B cell (primary cell): ENCODE measurements at regions of chr12 and their contacts with region 1.

Region 1: GRCh38 chr12:57904848-57905811 is 36.2 kb upstream of the ATP23 start:
- DNase-seq: peak; percentile 90
- ATAC-seq: peak; percentile 100
- H3K4me3 ChIP-seq: peak overlapping the region in 3 of 5 experiments; percentile 18 to 32 (median 29)
- H3K4me3 Mint-ChIP-seq: peak overlapping the region; percentile 68
- H3K27ac ChIP-seq: no peak overlapping the region
- H3K27ac Mint-ChIP-seq: peak overlapping the region; percentile 50
- H3K4me1 ChIP-seq: peaks cover 3 to 6% of the 10 kb centered on the region in 2 donors
- H3K4me1 Mint-ChIP-seq: peaks cover 8% of the 10 kb centered on the region
- H3K27me3 ChIP-seq: peaks cover 0 to 9% (median 4%) of the 10 kb centered on the region in 4 experiments
- H3K27me3 Mint-ChIP-seq: peaks cover 22% of the 10 kb centered on the region
- CTCF ChIP-seq: peak; percentile 100

Region 2: DNA sequence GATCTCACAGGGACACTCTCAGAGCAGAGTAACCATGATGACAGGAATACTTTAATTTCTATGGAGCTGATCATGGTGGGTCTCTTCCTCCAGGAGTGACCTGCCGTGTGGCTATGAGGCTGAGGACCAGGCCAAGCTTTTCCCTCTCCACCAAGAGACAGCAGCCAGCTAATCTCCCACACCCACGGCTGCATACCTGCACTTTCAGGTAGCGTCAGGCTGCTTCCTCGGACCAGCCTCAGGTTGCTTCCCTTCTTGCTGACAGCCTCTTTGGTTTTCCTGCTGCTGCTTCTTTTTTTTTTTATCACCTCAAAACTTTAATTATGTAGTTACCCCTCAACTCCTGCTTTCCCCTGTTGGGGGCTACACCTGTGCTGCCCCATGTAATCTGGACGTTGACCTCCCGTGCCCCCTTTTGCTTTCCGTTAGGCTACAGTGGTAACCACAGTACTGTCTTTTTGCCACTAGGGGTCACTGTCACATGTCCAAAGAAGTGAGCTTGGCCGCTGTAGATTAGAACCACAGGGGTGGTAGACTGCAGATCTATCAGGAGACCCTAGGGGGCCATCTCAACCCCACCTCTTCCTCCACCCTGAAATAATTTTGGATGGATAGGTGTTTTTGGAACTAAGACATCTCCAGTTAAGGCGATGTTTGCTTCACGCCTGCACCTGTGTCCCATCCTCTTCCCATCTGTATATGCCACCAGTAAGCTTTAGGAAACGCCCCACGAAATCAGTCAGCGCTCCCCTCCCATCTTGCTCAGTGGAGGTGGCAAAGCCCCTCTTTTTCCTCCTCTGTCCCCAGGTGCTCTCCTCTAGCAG is 321.9 kb before region 1 on chr12:
- CTCF ChIA-PET with region 1: interaction called, 23 read pairs
- POLR2A ChIA-PET with region 1: no interaction called
- intact Hi-C with region 1: no loop called
- DNase-seq: peak; percentile 88
- ATAC-seq: peak; percentile 100
- H3K4me3 ChIP-seq: no peak overlapping the region
- H3K4me3 Mint-ChIP-seq: no peak overlapping the region
- H3K27ac ChIP-seq: no peak overlapping the region
- H3K27ac Mint-ChIP-seq: no peak overlapping the region
- H3K4me1 ChIP-seq: peaks cover 0 to 3% of the 10 kb centered on the region in 2 donors
- H3K4me1 Mint-ChIP-seq: peaks cover 2% of the 10 kb centered on the region
- H3K27me3 ChIP-seq: peaks cover 0 to 46% (median 10%) of the 10 kb centered on the region in 4 experiments
- H3K27me3 Mint-ChIP-seq: peaks cover 14% of the 10 kb centered on the region
- CTCF ChIP-seq: peak; percentile 98

Region 3: GRCh38 chr12:57782608-57783465 is 122.3 kb before region 1 on chr12 and contains the start of gene TSFM:
- CTCF ChIA-PET with region 1: interaction called, 59 read pairs
- POLR2A ChIA-PET with region 1: no interaction called
- intact Hi-C with region 1: loop called (anchors 1 kb)
- DNase-seq: peak; percentile 96
- ATAC-seq: peak; percentile 99
- H3K4me3 ChIP-seq: peak within 1 kb of the TSS; percentile 83 to 100 (median 98)
- H3K4me3 Mint-ChIP-seq: peak within 1 kb of the TSS; percentile 100
- H3K27ac ChIP-seq: peak within 1 kb of the TSS; percentile 45 to 77
- H3K27ac Mint-ChIP-seq: peak within 1 kb of the TSS; percentile 96
- H3K4me1 ChIP-seq: peaks cover 9 to 17% of the 10 kb centered on the region in 2 donors
- H3K4me1 Mint-ChIP-seq: peaks cover 18% of the 10 kb centered on the region
- H3K27me3 ChIP-seq: no peaks in the 10 kb centered on the region
- H3K27me3 Mint-ChIP-seq: no peaks in the 10 kb centered on the region
- CTCF ChIP-seq: peak; percentile 94
- total RNA-seq, gene TSFM: 20.6 and 20.9 TPM in 2 replicates

Region 4: GRCh38 chr12:57815177-57816000 is 89.7 kb before region 1 on chr12:
- CTCF ChIA-PET with region 1: interaction called, 11 read pairs
- POLR2A ChIA-PET with region 1: interaction called, 3 read pairs
- intact Hi-C with region 1: no loop called
- DNase-seq: no peak
- ATAC-seq: no peak
- H3K4me3 ChIP-seq: no peak overlapping the region
- H3K4me3 Mint-ChIP-seq: no peak overlapping the region
- H3K27ac ChIP-seq: no peak overlapping the region
- H3K27ac Mint-ChIP-seq: no peak overlapping the region
- H3K4me1 ChIP-seq: no peaks in the 10 kb centered on the region
- H3K4me1 Mint-ChIP-seq: no peaks in the 10 kb centered on the region
- H3K27me3 ChIP-seq: no peaks in the 10 kb centered on the region
- H3K27me3 Mint-ChIP-seq: no peaks in the 10 kb centered on the region
- CTCF ChIP-seq: no peak

Region 5: GRCh38 chr12:57836442-57837375 is 68.4 kb before region 1 on chr12:
- CTCF ChIA-PET with region 1: interaction called, 182 read pairs
- POLR2A ChIA-PET with region 1: interaction called, 9 read pairs
- intact Hi-C with region 1: loop called (anchors 1 kb)
- DNase-seq: peak; percentile 63
- ATAC-seq: peak; percentile 29
- H3K4me3 ChIP-seq: peak overlapping the region in 4 of 5 experiments; percentile 3 to 38 (median 12)
- H3K4me3 Mint-ChIP-seq: peak overlapping the region; percentile 79
- H3K27ac ChIP-seq: peak overlapping the region; percentile 62 to 81
- H3K27ac Mint-ChIP-seq: peak overlapping the region; percentile 87
- H3K4me1 ChIP-seq: peaks cover 94 to 99% of the 10 kb centered on the region in 2 donors
- H3K4me1 Mint-ChIP-seq: peaks cover 93% of the 10 kb centered on the region
- H3K27me3 ChIP-seq: no peaks in the 10 kb centered on the region
- H3K27me3 Mint-ChIP-seq: no peaks in the 10 kb centered on the region
- CTCF ChIP-seq: no peak

Region 6: DNA sequence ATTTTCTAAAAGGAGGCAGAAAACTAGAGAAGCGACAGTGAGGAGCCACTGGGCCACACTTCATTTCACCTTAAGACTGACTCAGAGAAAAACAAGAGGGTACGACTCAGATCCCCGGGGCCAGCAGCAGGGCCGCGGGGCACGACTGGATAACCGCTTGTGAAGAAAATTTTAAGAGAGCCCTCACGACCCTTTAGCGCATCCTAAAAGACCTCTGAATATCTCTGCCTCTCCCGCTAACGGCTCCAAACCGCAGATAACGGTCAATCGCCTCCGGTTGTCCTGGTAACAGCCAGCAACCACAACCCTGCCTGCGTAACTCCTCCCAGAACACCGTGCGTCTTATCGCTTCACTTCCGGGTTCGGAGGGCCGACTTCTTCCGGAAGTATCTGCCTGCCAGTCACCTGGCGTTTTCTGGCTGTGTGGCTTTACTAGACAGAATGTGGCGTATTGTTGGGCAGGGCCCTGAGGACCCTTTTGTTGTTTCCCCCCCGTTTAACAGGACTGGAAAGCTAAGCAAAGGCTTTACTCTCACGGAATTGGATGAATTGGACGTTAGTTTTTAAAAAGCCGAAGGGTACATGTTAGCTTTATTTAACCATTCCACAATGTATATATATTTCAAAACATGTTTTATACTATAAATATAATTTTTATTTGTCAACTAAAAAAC is 30.8 kb after region 1 on chr12:
- CTCF ChIA-PET with region 1: interaction called, 6 read pairs
- POLR2A ChIA-PET with region 1: interaction called, 11 read pairs
- intact Hi-C with region 1: loop called (anchors 2 kb)
- DNase-seq: peak; percentile 96
- ATAC-seq: peak; percentile 92
- H3K4me3 ChIP-seq: peak overlapping the region; percentile 65 to 90 (median 73)
- H3K4me3 Mint-ChIP-seq: peak overlapping the region; percentile 91
- H3K27ac ChIP-seq: peak overlapping the region; percentile 95 to 99
- H3K27ac Mint-ChIP-seq: peak overlapping the region; percentile 97
- H3K4me1 ChIP-seq: peaks cover 17% of the 10 kb centered on the region in 2 donors
- H3K4me1 Mint-ChIP-seq: peaks cover 23% of the 10 kb centered on the region
- H3K27me3 ChIP-seq: no peaks in the 10 kb centered on the region
- H3K27me3 Mint-ChIP-seq: no peaks in the 10 kb centered on the region
- CTCF ChIP-seq: no peak